ENCODE measurements at regions of chr9 and their contacts with region 1.

Region 1: GRCh38 chr9:34899535-34900158 is 58.4 kb upstream of the PHF24 start:
- DNase-seq: peak; percentile 46 to 53
- H3K4me3 ChIP-seq: no peak overlapping the region
- H3K27ac ChIP-seq: no peak overlapping the region
- H3K4me1 ChIP-seq: no peaks in the 10 kb centered on the region
- H3K27me3 ChIP-seq: peaks cover 26% of the 10 kb centered on the region; the same call in 1 of the 2 replicates
- CTCF ChIP-seq: peak; percentile 77

Region 2: DNA sequence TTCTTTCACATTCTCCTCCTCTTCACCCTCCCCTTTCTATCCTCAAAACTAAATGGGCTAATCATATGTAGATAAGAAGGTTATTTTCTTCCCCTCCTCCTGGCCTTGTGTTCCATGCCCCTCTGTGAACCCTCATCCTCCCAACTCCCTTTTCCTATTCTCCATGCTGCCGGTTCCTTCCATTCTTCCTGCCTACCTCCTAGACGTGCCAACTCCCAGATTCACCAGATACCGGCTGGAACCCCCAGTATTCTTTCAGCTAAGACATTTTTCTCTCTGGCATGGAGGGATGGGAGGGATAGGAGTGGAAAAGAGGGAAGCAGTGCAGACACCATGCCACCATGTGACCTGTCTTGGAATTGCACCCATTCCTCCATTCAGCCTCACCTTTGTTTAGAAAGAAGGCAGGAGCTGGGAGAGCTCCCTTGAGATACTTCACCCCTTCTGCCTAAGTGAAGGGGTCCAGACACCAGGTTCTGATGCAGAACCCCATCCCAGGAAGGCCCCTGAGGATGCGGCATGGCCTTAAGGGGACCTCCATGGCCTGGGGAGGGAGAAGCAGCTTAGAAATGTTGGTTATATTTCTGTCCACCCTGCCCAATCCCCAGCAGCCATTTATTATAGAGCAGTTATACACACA is 94.7 kb after region 1 on chr9:
- CTCF ChIA-PET with region 1: interaction called, 3 read pairs
- POLR2A ChIA-PET with region 1: no interaction called
- intact Hi-C with region 1: loop called (anchors 2 kb)
- DNase-seq: peak in 1 of 2 experiments; percentile 22
- H3K4me3 ChIP-seq: no peak overlapping the region
- H3K27ac ChIP-seq: no peak overlapping the region
- H3K4me1 ChIP-seq: peaks cover 17% of the 10 kb centered on the region; the same call in 1 of the 2 replicates
- H3K27me3 ChIP-seq: no peaks in the 10 kb centered on the region
- CTCF ChIP-seq: peak; percentile 67

Region 3: DNA sequence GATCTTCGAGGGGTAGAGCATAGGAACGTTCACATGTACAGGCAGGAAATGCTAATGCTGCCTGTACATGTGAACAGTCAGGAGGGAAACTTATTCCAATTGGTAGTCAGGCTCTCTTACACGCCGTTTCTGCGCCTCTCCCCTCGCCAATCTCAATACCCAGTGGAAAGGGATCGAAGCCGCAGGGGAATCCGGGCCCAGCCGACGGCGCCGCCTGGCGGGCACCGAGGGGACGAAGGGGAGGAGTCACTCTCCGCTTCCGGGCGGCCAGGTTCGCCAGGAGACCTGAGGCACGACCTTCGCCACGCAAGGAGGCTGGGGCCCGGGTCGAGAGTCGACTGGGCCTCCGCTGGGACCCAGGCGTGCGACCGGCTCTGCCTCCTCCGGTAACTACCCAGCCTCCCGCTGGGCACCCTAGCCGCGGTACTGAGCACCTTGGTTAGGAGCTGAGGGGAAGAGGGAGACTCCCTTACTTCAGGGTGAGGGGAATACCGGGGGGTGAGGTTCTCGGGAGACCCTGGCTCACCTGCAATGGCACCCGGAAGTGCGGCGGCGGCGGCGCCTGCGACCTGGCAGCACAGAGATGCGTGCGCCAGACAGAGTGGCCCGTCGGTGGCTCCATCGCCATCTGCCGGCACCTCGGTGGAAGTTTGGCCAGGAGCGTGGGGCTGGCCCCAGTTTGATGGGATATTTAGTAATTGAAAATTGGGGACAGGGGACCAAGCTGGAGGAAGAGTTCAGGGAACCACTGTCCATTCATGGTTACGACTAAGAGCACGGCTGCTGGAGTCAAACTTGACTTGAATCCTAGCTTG is 196.6 kb after region 1 on chr9 and contains the start of gene PIGO:
- CTCF ChIA-PET with region 1: interaction called, 3 read pairs
- POLR2A ChIA-PET with region 1: no interaction called
- intact Hi-C with region 1: loop called (anchors 1 kb)
- DNase-seq: peak; percentile 70 to 84
- H3K4me3 ChIP-seq: peak within 1 kb of the TSS; percentile 87
- H3K27ac ChIP-seq: peak within 1 kb of the TSS; percentile 93
- H3K4me1 ChIP-seq: 0 out of 2 replicates have a peak, but pooled peaks cover 3% of the 10 kb centered on the region
- H3K27me3 ChIP-seq: no peaks in the 10 kb centered on the region
- CTCF ChIP-seq: peak; percentile 71; the same call in 1 of the 2 replicates
- total RNA-seq, gene PIGO: 18.2 and 20.3 TPM in 2 replicates

Region 4: DNA sequence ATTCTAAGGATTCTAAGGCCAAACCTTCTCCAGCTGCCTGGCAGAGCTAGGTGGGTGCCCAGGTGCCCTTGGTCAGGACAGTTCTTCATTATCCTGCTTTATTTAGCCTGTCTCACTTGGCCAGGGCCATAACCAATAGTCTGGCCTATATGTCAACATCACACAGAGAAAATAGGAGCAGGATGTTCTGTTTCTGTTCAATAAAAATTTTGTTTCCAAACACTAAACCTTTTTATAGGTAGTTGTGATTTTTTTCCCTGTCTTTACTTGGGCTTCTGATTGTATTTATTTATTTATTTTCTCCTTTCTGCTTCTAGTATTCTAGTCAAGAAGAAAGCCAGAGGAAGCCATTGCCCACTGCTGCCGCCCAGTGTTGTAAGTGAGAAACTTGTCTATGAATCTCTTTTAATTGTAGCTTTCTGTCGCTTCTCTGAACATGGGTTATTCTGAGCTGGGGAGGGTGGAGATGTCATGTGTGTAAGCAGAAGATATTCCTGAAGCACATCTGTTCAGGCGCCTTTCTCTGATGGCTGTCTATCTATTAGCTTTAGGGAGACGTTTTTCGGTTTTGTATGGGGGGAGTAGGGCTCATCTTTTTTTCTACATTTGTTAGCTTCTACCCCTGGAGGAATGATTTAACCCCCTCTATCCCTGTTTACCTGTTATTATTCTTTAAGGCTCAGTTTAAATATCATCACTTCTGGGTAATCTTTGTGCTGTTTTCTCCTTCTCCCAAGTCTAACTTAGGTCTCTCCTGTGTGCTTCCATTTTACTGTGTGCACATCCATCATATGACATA is 359.2 kb after region 1 on chr9:
- CTCF ChIA-PET with region 1: interaction called, 3 read pairs
- POLR2A ChIA-PET with region 1: no interaction called
- intact Hi-C with region 1: loop called (anchors 2 kb)
- DNase-seq: peak; percentile 11 to 37
- H3K4me3 ChIP-seq: no peak overlapping the region
- H3K27ac ChIP-seq: no peak overlapping the region
- H3K4me1 ChIP-seq: no peaks in the 10 kb centered on the region
- H3K27me3 ChIP-seq: no peaks in the 10 kb centered on the region
- CTCF ChIP-seq: peak; percentile 68

Region 5: DNA sequence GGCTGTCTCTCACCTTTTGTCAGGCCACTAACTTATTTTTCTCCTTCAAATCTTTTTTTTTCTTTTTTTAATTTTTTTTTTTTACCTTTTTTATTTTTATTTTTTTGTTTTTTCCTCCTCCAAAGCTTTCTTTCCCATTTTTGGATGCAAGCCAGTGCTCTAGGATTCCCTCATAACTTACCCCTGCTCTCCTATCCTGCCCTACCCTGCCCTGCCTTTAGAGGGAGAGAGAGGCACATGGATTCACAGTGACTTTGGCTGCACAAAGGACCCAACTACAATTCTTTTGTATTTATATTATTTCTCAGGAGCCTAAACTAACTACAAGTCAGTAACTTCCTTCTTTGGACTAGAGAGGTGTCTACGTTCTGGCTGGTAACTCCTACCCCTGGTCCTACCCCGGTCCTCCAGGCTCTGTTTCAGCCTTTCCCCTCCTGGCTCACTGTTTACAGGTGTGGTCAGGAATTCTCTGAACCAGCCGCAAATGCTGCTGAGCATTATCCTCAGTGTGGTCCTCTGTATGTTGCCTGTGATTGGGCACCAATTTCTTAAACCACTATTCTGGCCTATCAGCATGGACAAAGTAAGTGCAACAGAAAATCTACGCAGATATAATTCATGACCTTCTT is 581.8 kb after region 1 on chr9:
- CTCF ChIA-PET with region 1: interaction called, 5 read pairs
- POLR2A ChIA-PET with region 1: no interaction called
- intact Hi-C with region 1: loop called (anchors 1 kb)
- DNase-seq: peak; percentile 50 to 57
- H3K4me3 ChIP-seq: no peak overlapping the region
- H3K27ac ChIP-seq: no peak overlapping the region
- H3K4me1 ChIP-seq: no peaks in the 10 kb centered on the region
- H3K27me3 ChIP-seq: no peaks in the 10 kb centered on the region
- CTCF ChIP-seq: peak; percentile 74